Aorta (tissue), 5 donors: ENCODE measurements at regions of chr17 and their contacts with region 1.

Region 1: GRCh38 chr17:18217412-18218015 is 7.9 kb upstream of the LLGL1 start:
- DNase-seq: peak; percentile 81 to 90
- ATAC-seq: peak; percentile 88
- H3K4me3 ChIP-seq: no peak overlapping the region
- H3K27ac ChIP-seq: no peak overlapping the region
- H3K4me1 ChIP-seq: no peaks in the 10 kb centered on the region
- H3K27me3 ChIP-seq: no peaks in the 10 kb centered on the region

Region 2: DNA sequence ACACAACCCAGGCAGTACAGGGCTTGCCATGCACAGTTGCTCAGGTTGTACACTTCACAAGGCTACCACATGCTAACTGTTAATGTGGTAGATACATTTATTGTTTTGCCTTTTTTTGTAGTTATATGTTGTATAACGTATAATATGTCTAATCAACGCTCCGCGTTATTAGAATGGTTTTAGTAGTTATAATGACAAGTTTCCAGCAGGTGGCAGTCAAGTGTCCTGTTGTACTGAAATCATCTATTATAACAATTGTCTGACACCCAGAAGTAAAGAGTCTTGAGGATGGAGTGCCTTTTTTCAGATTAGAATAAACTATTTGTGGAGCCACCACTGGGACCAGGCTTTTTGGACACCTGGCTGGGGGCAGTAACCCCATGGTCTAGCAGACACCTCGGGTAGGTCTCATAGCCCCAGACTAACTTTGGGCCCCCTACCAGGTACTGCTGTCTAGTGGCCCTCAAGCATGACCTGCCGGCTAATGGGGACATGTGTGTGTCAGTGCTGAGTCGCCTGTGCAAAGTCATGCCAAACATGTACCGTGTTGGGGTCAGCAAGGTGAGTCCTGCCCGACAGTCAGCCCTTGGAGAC is 76.2 kb before region 1 on chr17:
- intact Hi-C with region 1: loop called in 1 of 2 experiments (anchors 5 kb)
- DNase-seq: no peak
- ATAC-seq: no peak
- H3K4me3 ChIP-seq: no peak overlapping the region
- H3K27ac ChIP-seq: no peak overlapping the region
- H3K4me1 ChIP-seq: no peaks in the 10 kb centered on the region
- H3K27me3 ChIP-seq: no peaks in the 10 kb centered on the region

Region 3: GRCh38 chr17:18332909-18333489 is 115.5 kb after region 1 on chr17:
- intact Hi-C with region 1: no loop called
- DNase-seq: no peak
- ATAC-seq: no peak
- H3K4me3 ChIP-seq: no peak overlapping the region
- H3K27ac ChIP-seq: no peak overlapping the region
- H3K4me1 ChIP-seq: no peaks in the 10 kb centered on the region
- H3K27me3 ChIP-seq: no peaks in the 10 kb centered on the region